ENCODE measurements at regions of chr3 and their contacts with region 1.

Region 1: DNA sequence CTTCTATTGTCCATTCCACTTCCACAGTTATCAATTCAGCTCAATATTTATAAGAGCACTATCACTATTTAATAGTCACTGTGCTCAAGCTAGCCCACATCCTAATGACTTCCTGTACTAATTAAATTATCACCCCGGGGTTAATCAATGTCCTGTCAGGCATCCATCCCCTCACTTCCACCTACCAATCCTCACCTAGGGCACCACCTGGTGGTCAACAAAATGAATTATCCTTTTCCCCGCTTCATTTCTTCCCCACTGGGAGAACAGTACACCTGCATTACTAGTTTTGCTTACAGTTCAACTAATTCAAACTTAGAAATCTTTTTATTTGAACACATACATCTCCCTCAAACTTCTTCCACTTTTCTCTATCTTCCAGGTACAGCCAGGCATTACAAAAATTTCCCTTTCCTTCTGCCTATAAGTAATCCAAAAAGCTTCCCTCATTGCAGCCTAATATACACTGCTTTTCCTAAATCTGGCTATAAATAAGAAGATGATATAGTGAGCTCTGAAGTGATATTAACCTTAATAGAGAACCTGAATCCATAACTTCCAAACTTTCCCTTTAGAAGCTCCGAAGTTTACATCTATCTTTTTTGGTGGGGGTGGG is 68.5 kb downstream of the TMCC1 start:
- DNase-seq: no peak

Region 2: DNA sequence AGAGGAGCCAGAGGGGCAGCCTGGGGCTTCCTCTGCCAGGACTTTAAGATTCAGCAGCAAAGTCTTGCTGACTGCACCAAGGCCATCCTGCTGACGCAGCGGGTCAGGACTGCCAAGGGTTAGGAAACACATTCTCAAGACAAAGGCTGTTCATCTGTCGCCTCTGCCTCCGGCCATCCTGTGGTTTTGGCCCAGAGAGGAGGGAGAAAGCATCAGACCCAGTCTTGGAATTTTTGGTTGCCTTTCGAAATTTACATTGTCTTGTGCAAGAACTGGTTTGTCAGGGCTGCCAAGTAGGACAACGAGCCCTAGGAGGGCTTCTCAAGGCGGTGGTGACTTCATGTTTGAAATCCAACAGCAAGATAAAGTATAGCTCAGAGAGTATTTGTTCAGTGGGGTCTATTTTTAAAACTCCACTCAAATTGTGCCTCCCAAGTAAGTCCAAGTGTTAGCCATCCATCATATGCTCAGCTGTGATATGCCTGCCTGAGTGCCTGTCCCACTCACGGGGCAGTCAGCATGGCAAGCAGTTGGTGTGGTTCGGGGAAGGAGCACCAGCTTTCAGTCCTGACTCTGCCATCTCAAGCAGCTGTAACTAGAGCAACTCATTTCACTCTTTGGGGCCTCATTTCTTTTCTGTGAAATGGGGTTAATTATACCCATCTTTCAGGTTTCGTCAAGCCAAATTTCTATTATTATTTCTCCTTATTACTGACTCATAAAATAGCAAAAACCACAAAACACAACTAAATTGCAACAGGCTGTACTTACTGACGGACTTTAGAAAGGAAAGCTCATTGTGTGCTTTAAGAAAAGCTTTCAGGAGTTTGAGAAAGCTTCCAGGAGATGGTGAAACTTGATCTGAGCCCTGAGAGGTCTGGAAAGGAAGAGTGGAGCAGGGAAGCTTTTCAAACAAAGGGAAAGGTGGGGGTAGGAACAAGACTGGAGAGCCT is 339.0 kb before region 1 on chr3:
- intact Hi-C with region 1: loop called in 1 of 2 experiments (anchors 10 kb)
- DNase-seq: peak; percentile 98

Region 3: GRCh38 chr3:129633751-129634392 is 191.2 kb before region 1 on chr3:
- intact Hi-C with region 1: loop called in 1 of 2 experiments (anchors 10 kb)
- DNase-seq: peak; percentile 29

Region 4: GRCh38 chr3:129650256-129650872 is 174.7 kb before region 1 on chr3:
- intact Hi-C with region 1: loop called in 1 of 2 experiments (anchors 5 kb)
- DNase-seq: peak; percentile 87

Region 5: DNA sequence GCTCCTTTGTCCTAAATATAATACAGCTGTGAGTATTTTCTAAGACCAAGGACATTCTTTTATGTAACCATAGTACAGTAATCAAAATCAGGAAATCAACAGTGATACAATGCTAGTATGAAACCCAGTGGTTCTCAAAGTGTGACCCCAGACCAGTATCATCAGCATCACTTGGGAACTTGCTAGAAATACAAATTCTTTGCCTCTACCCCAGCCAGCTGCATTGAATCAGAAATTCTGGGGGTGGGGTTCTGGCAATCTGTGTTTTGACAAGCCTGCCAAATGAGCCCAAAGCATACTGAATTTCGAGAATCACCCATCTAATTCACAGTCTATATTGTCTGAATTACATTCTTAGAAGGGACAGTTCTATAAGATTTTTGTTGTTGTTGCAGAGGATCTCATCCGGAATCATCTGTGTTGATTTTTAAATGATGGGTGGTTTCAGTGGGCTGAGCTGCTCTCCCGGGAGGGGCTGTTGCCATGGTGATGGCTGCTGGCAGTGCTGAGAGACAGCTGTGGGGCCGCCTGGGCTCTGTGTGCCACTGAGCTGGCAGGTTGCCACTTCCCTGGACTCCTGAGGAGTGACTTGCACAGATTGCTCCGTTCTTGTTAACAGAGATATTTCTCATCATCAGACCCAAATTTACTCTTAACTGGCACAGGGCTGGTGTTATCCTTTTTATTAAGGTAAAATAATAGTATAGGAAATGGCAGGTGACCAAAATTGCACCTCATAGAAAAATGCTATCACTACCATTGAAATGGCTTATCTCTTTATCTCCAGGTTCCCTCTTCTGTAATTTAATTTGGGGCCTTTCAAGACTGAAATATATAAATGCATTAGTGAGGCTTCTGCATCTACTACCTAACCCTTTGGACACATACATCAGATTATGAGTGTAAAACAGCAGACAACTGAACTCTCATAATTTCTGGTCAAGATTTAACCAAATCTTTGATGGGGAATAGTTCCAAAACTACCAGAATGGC is 1258.1 kb after region 1 on chr3:
- intact Hi-C with region 1: no loop called
- DNase-seq: no peak